ENCODE measurements at regions of chrX and their contacts with region 1.

Region 1: GRCh38 chrX:77910108-77910840 is at the start of gene ATP7A:
- DNase-seq: peak; percentile 34
- H3K4me3 ChIP-seq: peak within 1 kb of the TSS; percentile 70
- CTCF ChIP-seq: peak; percentile 66

Region 2: GRCh38 chrX:77668391-77669237 is 241.7 kb before region 1 on chrX:
- CTCF ChIA-PET with region 1: no interaction called
- POLR2A ChIA-PET with region 1: no interaction called
- DNase-seq: no peak
- H3K4me3 ChIP-seq: no peak overlapping the region
- CTCF ChIP-seq: no peak

Region 3: GRCh38 chrX:77814210-77814609 is 96.1 kb before region 1 on chrX:
- CTCF ChIA-PET with region 1: no interaction called
- POLR2A ChIA-PET with region 1: no interaction called
- DNase-seq: no peak
- H3K4me3 ChIP-seq: no peak overlapping the region
- CTCF ChIP-seq: no peak

Region 4: DNA sequence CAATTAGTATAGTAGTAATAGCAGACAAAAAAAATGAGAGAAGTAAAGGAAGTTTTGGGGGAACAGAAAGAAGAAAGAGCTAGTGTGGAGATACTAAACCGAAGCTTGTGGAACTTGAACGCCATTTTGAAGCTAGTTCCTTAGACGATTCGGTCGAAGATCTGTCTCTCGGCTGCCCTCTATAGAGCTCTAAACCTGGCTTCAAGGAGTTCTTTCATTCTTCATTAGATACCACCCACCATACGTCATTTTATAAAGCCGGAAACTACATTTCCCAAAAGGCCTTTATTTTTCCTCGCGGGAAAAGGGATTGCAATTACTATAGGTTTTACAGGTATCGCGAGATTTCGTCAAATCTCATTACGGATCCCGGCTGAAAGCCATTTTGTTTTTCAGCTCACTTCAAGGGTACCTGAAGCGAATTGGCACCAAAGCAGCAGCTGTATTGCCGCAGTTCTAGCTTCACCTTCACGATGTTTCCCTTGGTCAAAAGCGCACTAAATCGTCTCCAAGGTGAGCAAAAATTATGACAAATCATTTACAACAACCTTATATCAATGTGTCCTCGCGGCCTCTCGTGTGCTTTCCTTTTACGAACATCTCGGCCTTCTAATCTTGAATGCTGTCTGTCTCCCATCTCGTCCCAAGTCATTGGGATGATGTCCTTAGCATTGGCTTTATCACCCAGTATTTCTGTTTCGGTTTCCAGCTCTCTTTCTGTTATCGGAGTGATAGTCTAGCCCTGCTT is 11.0 kb before region 1 on chrX and contains the start of gene COX7B:
- CTCF ChIA-PET with region 1: interaction called, 10 read pairs
- POLR2A ChIA-PET with region 1: interaction called, 4 read pairs
- DNase-seq: peak; percentile 84
- H3K4me3 ChIP-seq: peak within 1 kb of the TSS; percentile 68
- CTCF ChIP-seq: peak; percentile 44

Measured in AG04449 (cell line).